ENCODE measurements at regions of chrX and their contacts with region 1.

Region 1: GRCh38 chrX:133171962-133172708 is 46.0 kb downstream of the TFDP3 start:
- DNase-seq: peak in 1 of 3 donors; percentile 25
- ATAC-seq: peak; percentile 61
- H3K4me3 ChIP-seq: no peak overlapping the region
- H3K4me1 ChIP-seq: no peaks in the 10 kb centered on the region
- CTCF ChIP-seq: peak; percentile 7

Region 2: GRCh38 chrX:132984058-132984650 is 188.0 kb before region 1 on chrX:
- intact Hi-C with region 1: no loop called
- DNase-seq: no peak
- ATAC-seq: no peak
- H3K4me3 ChIP-seq: no peak overlapping the region
- H3K4me1 ChIP-seq: no peaks in the 10 kb centered on the region
- CTCF ChIP-seq: no peak

Region 3: GRCh38 chrX:133045986-133046385 is 126.1 kb before region 1 on chrX:
- intact Hi-C with region 1: loop called in 1 of 2 experiments (anchors 10 kb)
- DNase-seq: peak in 1 of 3 donors; percentile 30
- ATAC-seq: peak; percentile 58
- H3K4me3 ChIP-seq: no peak overlapping the region
- H3K4me1 ChIP-seq: no peaks in the 10 kb centered on the region
- CTCF ChIP-seq: no peak

Region 4: DNA sequence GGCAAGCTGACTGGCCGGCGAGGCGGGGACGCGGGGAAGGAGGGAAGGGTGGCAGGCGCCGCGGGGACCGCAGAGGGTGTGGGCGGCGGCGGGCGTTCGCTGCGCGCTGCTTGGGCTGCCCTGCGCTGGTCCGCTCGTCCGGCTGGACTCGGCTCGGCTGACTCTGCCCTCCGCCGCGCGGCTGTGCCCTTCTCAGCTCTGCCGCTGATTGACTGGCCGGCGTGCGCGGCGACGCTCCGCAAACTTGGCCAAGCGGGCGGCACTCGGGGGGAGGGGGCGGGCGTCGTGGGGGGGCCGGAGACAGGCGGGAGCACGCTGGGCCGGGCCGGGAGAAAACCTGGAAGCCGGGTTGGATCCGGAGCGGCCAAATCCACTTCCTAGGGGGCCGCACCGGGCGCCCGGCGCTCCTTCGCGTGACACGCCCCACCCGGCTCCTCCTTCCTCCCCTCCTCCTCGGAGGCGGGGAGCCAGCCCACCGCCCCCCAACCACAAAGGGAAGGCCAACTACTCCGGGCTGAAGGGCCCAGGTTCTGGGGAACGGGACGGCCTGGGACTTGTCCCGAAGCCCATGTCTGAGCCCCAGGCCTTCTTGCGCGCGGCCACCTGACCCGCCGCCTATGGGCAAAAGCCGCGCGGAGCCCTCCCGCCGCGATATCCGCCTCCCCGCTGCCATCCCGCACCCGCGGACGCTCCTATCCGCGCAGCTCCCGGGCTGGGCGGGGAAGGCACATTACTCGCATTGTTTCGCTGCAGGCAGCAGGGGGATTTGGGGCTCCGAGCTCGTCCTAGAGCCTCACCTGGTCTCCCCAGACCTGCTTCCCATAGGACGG is 243.4 kb after region 1 on chrX and contains the start of gene GPC4:
- intact Hi-C with region 1: no loop called
- DNase-seq: peak; percentile 77 to 87 (median 78)
- ATAC-seq: peak; percentile 89
- H3K4me3 ChIP-seq: peak within 1 kb of the TSS; percentile 36
- H3K4me1 ChIP-seq: no peaks in the 10 kb centered on the region
- CTCF ChIP-seq: no peak
- total RNA-seq, gene GPC4: 12.7 to 33.5 (median 18.4) TPM